PC-3 (cell line): ENCODE measurements at regions of chr10 and their contacts with region 1.

Region 1: GRCh38 chr10:78458983-78459638 is 425.4 kb downstream of the RPS24 start:
- DNase-seq: peak; percentile 100
- ATAC-seq: peak; percentile 91
- H3K4me3 ChIP-seq: peak overlapping the region; percentile 6; the same call in 1 of the 2 replicates
- H3K27ac ChIP-seq: peak overlapping the region; percentile 85
- H3K4me1 ChIP-seq: peaks cover 57% of the 10 kb centered on the region
- H3K27me3 ChIP-seq: no peaks in the 10 kb centered on the region
- CTCF ChIP-seq: no peak

Region 2: GRCh38 chr10:78416111-78417011 is 42.8 kb before region 1 on chr10:
- CTCF ChIA-PET with region 1: no interaction called
- POLR2A ChIA-PET with region 1: no interaction called
- intact Hi-C with region 1: no loop called
- DNase-seq: peak; percentile 98
- ATAC-seq: peak; percentile 89
- H3K4me3 ChIP-seq: no peak overlapping the region
- H3K27ac ChIP-seq: peak overlapping the region; percentile 70
- H3K4me1 ChIP-seq: peaks cover 22% of the 10 kb centered on the region
- H3K27me3 ChIP-seq: no peaks in the 10 kb centered on the region
- CTCF ChIP-seq: no peak

Region 3: DNA sequence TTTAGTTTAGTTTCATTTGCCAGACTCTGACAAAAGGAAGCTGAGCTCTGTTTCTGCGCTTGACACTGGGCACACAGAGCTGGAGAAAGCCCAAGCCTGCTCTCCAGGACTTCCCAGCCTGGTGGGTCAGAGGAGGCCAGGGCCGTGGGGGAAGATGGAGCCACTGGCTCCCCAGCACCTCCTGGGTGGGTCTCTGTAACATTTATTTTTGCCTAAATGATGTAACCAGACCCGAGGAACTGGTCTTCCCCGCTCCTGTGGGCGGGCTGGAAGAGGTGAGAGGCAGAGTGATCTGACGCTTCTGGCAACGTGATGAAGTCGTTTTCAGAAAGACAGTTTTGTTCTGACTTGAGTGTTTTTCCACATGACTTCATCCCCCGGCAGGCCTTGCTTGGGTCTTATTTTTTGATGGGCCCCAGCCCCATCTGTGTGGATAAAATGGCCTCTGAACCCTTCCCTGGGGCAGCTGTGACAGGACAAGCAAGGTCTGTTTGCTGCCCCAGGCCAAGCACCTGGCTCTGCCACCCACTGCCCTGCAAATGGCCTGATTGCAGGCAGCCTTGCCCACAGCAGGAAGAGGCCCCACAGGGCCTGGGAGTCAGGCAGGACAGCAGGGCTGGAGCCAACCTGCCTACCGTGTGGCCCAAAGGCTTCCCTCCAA is 304.7 kb after region 1 on chr10:
- CTCF ChIA-PET with region 1: no interaction called
- POLR2A ChIA-PET with region 1: no interaction called
- intact Hi-C with region 1: no loop called
- DNase-seq: no peak
- ATAC-seq: no peak
- H3K4me3 ChIP-seq: no peak overlapping the region
- H3K27ac ChIP-seq: no peak overlapping the region
- H3K4me1 ChIP-seq: no peaks in the 10 kb centered on the region
- H3K27me3 ChIP-seq: no peaks in the 10 kb centered on the region
- CTCF ChIP-seq: no peak

Region 4: DNA sequence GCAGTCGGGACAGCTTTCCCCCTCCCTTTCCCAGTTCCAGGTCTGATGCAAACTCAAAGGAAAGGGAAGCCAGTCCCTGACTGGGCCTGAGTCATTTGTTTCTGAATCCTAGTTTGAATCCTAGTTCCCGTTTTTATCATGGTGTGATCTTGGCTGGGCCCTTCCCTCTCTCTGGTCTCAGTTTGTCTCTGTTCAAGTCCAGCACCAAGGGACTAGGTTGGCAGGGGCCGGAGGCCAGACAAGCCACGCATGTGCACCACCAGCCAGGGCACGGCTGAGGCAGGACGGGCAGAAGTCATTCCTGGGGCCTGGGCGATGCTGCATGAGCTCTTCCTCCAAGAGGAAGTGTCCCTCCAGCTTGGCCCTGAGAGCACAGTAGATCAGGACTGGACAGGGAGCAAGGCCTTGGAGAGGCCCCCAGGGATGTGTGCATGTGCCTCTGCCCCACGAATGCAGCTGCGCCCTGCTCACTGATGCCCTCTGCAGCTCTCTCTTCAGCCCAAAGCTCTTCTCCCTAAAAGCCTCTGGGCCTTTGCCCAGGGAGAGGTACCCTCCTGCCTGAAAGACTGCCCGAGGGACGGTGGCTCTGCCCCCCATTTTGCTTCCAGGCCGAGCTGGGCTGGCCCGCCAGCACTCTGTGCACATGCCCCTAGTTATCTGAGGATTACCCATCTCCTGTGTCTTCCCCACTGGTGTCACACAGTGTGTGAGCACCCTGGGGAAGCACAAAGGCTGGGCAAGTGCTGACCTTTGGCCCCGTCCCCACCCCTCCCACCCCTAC is 696.4 kb after region 1 on chr10:
- CTCF ChIA-PET with region 1: no interaction called
- POLR2A ChIA-PET with region 1: no interaction called
- intact Hi-C with region 1: loop called (anchors 5 kb)
- DNase-seq: peak; percentile 93
- ATAC-seq: no peak
- H3K4me3 ChIP-seq: no peak overlapping the region
- H3K27ac ChIP-seq: peak overlapping the region; percentile 47
- H3K4me1 ChIP-seq: peaks cover 82% of the 10 kb centered on the region
- H3K27me3 ChIP-seq: no peaks in the 10 kb centered on the region
- CTCF ChIP-seq: no peak

Region 5: DNA sequence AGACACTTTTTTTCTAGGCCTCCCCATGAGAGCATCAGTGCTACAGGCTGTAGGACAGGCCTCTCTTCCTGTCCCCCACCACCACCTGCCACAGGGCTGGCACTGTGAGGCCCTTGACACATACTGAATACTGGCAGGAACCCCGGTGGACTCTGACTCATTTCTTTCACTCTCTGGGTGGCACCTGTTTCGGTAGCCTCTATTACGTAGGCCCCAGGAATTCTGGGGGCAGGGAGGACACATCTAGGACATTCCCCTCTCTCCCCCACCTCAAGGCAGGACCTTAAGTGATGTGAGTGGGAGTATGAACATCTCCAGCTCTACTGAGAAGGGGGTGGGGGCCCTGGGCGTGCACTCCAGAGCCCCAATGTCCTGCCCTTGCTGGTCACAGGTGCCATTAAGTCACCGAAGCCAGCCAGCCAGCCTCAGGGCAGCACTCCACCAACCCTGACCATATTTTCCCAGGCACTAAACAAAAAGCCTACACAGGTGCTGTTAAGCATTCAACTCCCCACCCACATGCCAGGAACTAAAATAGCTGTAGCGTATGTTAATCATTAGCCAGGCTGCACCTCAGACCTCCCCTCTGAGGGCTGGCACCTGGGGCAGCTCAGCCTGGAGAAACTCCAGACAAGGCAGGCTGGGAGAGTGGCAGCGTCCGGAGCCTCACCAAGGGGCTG is 1737.3 kb after region 1 on chr10:
- CTCF ChIA-PET with region 1: no interaction called
- POLR2A ChIA-PET with region 1: no interaction called
- intact Hi-C with region 1: loop called (anchors 10 kb)
- DNase-seq: peak; percentile 100
- ATAC-seq: peak; percentile 97
- H3K4me3 ChIP-seq: peak overlapping the region; percentile 21
- H3K27ac ChIP-seq: peak overlapping the region; percentile 74
- H3K4me1 ChIP-seq: peaks cover 69% of the 10 kb centered on the region
- H3K27me3 ChIP-seq: no peaks in the 10 kb centered on the region
- CTCF ChIP-seq: no peak